ENCODE measurements at regions of chr4 and their contacts with region 1.

Region 1: GRCh38 chr4:48779998-48780742 is at the start of gene FRYL:
- DNase-seq: peak; percentile 100
- ATAC-seq: peak; percentile 89 to 94
- H3K4me3 ChIP-seq: peak within 1 kb of the TSS; percentile 82 to 93 (median 85)
- H3K27ac ChIP-seq: peak within 1 kb of the TSS; percentile 92 to 97 (median 94)
- H3K4me1 ChIP-seq: peaks cover 39 to 40% of the 10 kb centered on the region in 2 donors
- H3K27me3 ChIP-seq: no peaks in the 10 kb centered on the region
- CTCF ChIP-seq: no peak
- POLR2A ChIP-seq: peak; percentile 78 to 80
- total RNA-seq, gene FRYL: 14.5 to 43.7 (median 20.1) TPM

Region 2: DNA sequence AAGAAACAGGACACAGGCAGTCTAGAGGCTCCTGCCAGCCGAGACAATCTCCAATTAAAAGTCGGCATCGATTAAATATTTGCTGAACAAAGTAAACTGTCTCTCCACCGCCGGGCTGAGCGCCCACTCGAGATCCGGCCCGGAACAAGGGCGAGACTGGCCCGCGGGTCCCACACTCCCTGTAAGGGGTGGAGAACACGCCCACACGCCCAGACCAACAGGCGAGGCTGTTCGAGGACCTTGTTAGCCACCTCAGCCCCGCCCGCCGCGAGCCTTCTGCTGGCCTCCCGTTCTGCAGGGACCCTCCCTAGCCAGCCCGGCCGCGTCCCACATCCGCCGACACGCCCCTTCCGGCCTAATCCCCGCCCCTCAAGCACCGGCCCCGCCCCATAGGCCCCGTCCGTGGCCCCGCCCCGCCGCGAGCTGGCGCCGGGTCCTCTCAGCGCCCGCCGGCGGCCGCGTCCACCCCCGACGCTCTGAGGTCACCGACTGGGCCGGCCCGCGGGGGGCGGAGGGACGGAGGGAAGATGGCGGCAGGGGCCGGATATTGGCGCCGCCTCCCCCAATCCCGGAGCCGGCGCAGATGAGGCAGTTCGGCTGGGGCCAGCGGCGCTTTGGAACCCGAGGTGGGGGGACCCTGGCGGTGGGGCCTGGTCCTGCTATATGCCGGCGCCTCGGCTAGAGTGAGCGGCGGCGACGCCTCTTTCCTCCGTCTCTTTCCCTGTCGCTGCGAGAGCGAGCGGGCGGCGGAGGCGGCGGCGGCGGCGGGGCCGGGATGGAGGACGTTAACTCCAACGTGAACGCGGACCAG is 439.0 kb before region 1 on chr4 and contains the start of gene SLAIN2:
- in situ Hi-C with region 1: loop called in 2 of 4 experiments (anchors 25 kb)
- intact Hi-C with region 1: loop called (anchors 1 kb)
- DNase-seq: peak; percentile 99
- ATAC-seq: peak; percentile 85 to 90
- H3K4me3 ChIP-seq: peak within 1 kb of the TSS; percentile 75 to 97 (median 90)
- H3K27ac ChIP-seq: peak within 1 kb of the TSS; percentile 95 to 99 (median 97)
- H3K4me1 ChIP-seq: peaks cover 50 to 57% of the 10 kb centered on the region in 2 donors
- H3K27me3 ChIP-seq: no peaks in the 10 kb centered on the region
- CTCF ChIP-seq: peak; percentile 14 to 66 (median 47)
- POLR2A ChIP-seq: peak; percentile 89 to 91
- total RNA-seq, gene SLAIN2: 64.3 to 211 (median 138) TPM

Region 3: DNA sequence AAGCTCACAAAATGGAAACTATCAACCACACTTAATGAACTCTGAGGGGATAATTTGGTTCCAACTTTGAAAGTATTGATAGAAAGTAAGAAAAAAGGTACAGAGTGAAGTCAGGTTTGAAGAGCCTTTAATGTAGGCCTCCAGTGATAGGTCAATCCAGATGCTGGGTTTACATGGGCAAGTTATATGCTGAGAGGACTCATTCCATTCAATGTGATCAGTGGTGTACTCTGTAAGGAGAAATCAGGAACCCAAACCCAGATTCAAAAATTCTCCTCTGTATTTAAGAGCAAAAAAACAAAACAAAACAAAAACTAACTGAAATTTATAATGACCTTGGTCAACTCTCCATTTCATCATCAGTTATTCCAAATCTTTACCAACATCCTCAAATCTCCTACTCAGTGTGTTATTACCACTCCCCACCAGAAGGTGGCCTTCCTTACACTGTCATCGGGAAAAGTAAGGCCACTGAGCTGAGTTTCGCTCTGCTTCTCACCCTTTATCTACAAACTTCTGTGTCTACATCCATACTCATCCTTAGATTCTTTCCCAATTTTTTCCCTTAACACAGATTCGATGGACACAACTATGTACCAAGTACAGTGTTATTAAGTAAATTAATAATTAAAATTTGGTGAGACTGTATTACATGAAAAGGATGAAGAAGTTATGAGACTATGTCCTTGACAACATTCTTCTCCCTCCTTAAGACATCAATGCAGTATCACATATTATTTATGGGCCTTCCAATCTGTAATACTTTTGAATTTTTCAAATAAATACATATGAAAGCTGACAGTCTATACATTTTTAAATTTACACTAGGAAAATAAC is 201.8 kb before region 1 on chr4:
- in situ Hi-C with region 1: no loop called
- intact Hi-C with region 1: loop called (anchors 2 kb)
- DNase-seq: peak in 1 of 2 donors; percentile 34
- ATAC-seq: peak; percentile 83 to 93
- H3K4me3 ChIP-seq: no peak overlapping the region
- H3K27ac ChIP-seq: no peak overlapping the region
- H3K4me1 ChIP-seq: no peaks in the 10 kb centered on the region
- H3K27me3 ChIP-seq: no peaks in the 10 kb centered on the region
- CTCF ChIP-seq: peak; percentile 78 to 89 (median 83)
- POLR2A ChIP-seq: no peak

Region 4: GRCh38 chr4:48668254-48669017 is 111.7 kb before region 1 on chr4:
- in situ Hi-C with region 1: no loop called
- intact Hi-C with region 1: loop called (anchors 5 kb)
- DNase-seq: no peak
- ATAC-seq: peak; percentile 81 to 97
- H3K4me3 ChIP-seq: no peak overlapping the region
- H3K27ac ChIP-seq: peak overlapping the region; percentile 53 to 77 (median 68)
- H3K4me1 ChIP-seq: peaks cover 37 to 42% of the 10 kb centered on the region in 2 donors
- H3K27me3 ChIP-seq: no peaks in the 10 kb centered on the region
- CTCF ChIP-seq: no peak
- POLR2A ChIP-seq: no peak

Region 5: DNA sequence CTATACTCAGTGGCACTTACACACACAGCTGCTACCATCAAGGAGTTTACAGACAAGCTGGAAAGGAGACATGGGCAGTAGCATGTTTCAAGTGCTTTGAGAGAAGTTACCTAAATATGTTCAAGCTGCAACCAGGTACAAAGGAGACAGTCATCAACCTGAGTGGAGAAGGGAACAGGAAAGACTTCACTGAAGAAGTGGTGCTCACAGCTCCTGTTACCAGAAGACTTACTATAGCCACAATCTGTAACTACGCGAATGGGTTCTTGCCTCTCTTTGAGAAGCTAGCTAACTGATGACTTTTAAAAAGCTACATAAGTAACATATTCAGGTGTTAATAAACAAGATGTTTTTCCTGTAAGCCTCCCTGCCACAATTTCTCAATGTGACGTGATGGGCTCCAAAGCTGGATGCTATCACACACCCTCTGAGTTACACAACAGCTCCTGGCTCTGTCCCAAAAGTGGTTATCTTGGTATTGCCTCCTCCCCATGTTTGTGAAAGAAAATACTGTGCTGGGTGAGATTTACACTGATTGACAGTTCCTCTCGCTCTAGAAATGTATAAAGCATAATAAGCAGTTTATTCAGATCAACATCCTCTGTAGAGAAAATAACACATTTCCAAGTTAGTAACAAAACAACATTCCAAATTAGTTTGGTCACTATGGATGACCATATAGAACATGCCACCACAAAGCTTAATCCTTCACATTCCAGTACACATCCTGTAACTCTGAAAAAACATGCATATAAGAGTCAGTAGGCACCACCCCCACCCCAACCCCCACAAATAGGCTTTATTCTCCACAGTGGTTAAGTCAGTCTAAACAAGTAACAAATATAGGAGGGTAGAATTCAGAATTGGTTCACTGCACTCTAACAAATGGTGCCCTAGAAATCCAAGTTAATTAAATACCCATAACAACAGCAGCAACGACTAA is 81.9 kb before region 1 on chr4:
- in situ Hi-C with region 1: no loop called
- intact Hi-C with region 1: loop called (anchors 5 kb)
- DNase-seq: peak; percentile 16 to 61
- ATAC-seq: peak; percentile 50 to 81
- H3K4me3 ChIP-seq: no peak overlapping the region
- H3K27ac ChIP-seq: peak overlapping the region in 1 of 4 donors; percentile 45
- H3K4me1 ChIP-seq: peaks cover 24 to 25% of the 10 kb centered on the region in 2 donors
- H3K27me3 ChIP-seq: no peaks in the 10 kb centered on the region
- CTCF ChIP-seq: no peak
- POLR2A ChIP-seq: no peak

Region 6: DNA sequence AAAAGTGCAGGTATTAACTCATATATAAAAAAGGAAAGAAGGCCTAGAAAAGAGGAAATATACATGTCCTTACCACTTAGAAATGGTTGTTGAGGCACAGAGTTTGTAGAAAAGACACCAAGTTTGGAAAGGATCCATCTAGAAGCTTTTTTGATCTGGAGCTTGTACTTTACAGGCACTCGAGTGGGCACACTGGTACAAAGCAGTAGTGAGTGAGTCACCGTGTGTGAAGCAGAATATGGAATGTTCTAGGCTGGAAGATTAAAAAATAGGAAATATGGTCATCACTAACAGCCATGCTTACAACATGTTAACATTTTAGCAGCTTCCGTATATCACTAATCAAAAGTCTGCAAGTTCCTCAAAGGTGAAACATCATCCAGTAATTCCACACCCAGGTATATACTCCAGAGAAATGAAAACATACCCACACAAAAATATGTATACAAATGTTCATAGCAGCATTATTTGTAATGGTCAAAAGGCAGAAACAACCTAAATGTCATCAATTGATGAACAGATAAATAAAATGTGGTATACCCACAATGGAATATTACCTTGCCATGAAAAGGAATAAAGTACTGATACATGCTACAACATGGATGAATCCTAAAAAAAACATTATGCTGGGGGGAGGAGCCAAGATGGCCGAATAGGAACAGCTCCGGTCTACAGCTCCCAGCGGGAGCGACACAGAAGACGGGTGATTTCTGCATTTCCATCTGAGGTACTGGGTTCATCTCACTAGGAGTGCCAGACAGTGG is 69.5 kb before region 1 on chr4:
- in situ Hi-C with region 1: no loop called
- intact Hi-C with region 1: no loop called
- DNase-seq: no peak
- ATAC-seq: no peak
- H3K4me3 ChIP-seq: no peak overlapping the region
- H3K27ac ChIP-seq: no peak overlapping the region
- H3K4me1 ChIP-seq: no peaks in the 10 kb centered on the region
- H3K27me3 ChIP-seq: no peaks in the 10 kb centered on the region
- CTCF ChIP-seq: no peak
- POLR2A ChIP-seq: no peak

Region 7: DNA sequence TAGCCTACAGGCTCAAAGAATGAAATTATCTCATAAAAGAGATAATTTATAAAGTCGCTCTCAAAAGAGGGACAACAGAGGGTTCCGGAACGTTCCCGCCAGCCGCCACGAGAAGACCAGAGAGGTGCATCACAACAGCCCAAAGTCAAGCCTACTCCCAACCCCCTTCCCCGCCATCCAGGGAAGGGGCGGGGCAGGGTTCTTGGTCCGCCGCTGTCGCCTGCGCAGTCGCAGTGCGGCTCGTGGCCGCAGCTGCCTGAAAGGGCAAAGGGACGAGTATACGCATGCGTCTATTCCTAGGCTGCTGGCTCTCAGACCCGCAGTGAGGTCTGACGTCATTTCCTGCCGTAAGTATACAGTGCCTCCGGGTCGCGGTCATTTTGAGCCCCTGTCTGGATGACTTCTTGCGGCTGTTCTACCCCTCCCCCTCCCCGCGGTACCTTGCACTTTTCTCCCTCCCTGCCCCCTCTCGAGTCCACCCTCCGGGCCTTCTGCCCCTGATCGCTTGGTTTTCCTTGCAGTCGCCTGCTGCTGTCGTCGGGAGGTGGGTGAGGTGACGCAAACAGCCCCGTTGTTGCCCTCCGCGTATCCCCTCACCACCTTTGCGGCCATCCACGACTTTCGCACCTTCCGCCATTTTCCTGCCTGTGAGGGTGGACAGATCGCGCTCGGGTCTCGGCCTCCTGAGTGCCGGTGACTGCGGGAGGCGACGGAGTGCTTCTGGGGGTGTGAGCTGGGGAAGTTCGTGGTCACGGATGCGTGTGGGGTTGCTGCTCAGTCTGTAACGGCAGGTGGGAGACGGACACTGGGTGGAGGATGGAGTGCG is 50.7 kb after region 1 on chr4 and contains the start of gene OCIAD1:
- in situ Hi-C with region 1: loop called in 2 of 4 experiments (anchors 5 kb)
- intact Hi-C with region 1: loop called (anchors 1 kb)
- DNase-seq: peak; percentile 99
- ATAC-seq: peak; percentile 100
- H3K4me3 ChIP-seq: peak within 1 kb of the TSS; percentile 80 to 100 (median 92)
- H3K27ac ChIP-seq: peak within 1 kb of the TSS; percentile 95 to 96 (median 96)
- H3K4me1 ChIP-seq: peaks cover 17 to 22% of the 10 kb centered on the region in 2 donors
- H3K27me3 ChIP-seq: no peaks in the 10 kb centered on the region
- CTCF ChIP-seq: peak in 1 of 5 experiments; percentile 7
- POLR2A ChIP-seq: peak; percentile 38 to 47
- total RNA-seq, gene OCIAD1: 84.4 to 157 (median 126) TPM